ENCODE measurements at regions of chr2 and their contacts with region 1.

Region 1: GRCh38 chr2:71331581-71332434 is at the start of gene ZNF638:
- DNase-seq: peak; percentile 89
- H3K4me3 ChIP-seq: peak within 1 kb of the TSS; percentile 68 to 91
- H3K27ac ChIP-seq: peak within 1 kb of the TSS; percentile 91 to 94
- H3K4me1 ChIP-seq: no peaks in the 10 kb centered on the region
- H3K27me3 ChIP-seq: no peaks in the 10 kb centered on the region
- CTCF ChIP-seq: peak; percentile 66 to 85 (median 83)
- POLR2A ChIP-seq: peak; percentile 84
- total RNA-seq, gene ZNF638: 137 to 164 TPM

Region 2: DNA sequence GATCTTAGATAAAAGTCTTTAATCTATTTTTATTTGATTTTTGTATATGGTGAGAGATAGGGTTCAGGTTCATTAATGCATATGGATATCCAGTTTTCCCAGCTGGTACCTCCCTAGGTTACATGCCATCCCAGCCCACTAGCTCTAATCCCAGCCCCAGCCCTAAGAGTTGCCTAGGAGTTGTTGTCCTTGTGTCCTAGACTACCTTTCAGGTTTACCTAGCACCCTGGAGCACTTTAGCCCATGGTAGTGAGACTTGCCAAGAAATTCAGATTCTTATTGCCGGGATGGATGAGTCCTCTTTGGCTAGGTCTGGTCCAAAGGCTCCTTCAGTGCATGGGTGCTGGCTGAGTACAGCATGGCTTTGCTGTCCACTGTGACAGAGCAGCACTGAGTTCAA is 40.2 kb after region 1 on chr2:
- intact Hi-C with region 1: no loop called
- DNase-seq: no peak
- H3K4me3 ChIP-seq: no peak overlapping the region
- H3K27ac ChIP-seq: no peak overlapping the region
- H3K4me1 ChIP-seq: no peaks in the 10 kb centered on the region
- H3K27me3 ChIP-seq: no peaks in the 10 kb centered on the region
- CTCF ChIP-seq: no peak
- POLR2A ChIP-seq: no peak

Region 3: DNA sequence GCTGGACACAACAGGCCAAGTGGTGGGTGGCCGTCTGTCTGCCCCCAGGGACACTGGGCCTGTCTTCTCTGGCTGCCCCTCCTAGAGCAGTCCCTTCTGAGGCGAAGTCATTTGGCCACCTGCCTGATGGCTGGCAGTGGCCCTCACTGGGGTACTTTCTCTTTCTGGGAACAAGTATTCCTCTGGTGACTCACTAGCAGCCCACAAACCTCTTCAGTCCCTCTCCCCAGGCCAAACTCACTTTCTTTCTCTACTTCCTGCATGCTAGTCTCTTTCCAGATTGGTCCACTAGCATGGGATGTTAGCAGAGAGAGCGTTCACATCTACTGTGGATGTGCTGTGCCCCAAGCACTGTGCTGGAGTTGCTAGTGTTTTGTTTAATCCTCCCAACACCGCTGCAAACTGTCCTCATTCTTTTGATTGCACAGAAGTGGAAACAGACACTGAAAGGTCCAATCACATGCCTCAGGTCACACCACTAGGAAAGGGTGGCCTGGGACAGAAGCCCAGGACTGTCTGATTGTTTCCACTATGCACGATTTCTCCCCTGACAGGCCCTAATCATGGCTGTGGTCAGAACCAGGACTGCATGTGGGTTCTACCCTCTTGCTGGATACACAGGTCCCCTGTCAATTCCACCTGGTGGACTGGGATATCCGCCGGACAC is 126.7 kb after region 1 on chr2:
- intact Hi-C with region 1: loop called (anchors 5 kb)
- DNase-seq: no peak
- H3K4me3 ChIP-seq: no peak overlapping the region
- H3K27ac ChIP-seq: no peak overlapping the region
- H3K4me1 ChIP-seq: peaks cover 5% of the 10 kb centered on the region
- H3K27me3 ChIP-seq: peaks cover 3% of the 10 kb centered on the region
- CTCF ChIP-seq: no peak
- POLR2A ChIP-seq: no peak

Measured in prostate gland (tissue), 2 donors.